ENCODE measurements at regions of chr3 and their contacts with region 1.

Region 1: DNA sequence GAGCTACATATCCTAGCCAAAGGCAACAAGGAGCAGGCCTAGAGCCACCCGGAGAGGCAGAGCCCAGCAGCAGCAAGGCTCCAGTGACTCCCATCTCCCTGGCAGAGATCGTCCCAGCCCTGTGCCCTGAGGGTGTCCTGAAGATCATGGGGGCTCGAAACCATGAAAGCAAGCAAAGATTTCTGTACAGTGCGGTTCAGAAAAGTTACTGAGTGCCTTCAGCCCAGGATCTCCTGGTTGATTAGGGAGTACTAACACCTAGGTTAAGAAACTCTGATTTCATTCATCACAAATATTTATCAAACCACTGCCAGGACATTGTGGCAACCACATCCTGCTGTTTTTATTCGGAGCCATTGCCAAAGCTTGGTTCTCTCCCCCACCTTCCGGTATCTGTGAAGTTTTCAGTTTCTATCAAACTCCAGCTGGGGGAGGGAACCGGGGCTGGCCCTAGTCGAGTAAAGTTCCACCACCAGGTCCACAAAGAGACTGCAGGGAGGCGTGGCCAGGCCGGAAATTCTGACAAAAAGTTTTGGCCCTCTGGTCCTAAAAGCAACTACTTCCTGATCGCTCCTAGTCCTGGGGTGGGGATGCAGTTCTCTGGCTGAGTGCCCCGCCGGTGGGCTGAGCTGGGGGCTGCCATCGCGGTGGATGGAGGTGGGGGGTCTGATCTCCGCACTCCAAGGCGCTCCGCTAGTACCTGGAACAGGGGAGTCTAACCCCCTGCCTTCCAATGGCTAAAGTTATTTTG is 1.2 kb downstream of the RAB43 start:
- DNase-seq: peak; percentile 63 to 96 (median 93)
- ATAC-seq: peak; percentile 72
- H3K4me3 ChIP-seq: peak overlapping the region; percentile 95
- H3K4me3 Mint-ChIP-seq: peak overlapping the region; percentile 86 to 99 (median 98)
- H3K27ac ChIP-seq: peak overlapping the region; percentile 83
- H3K27ac Mint-ChIP-seq: peak overlapping the region; percentile 91 to 100 (median 97)
- H3K4me1 ChIP-seq: peaks cover 32 to 33% of the 10 kb centered on the region in 2 donors
- H3K4me1 Mint-ChIP-seq: peaks cover 26 to 58% (median 42%) of the 10 kb centered on the region in 7 donors
- H3K27me3 ChIP-seq: no peaks in the 10 kb centered on the region
- H3K27me3 Mint-ChIP-seq: no peaks in the 10 kb centered on the region

Region 2: GRCh38 chr3:128617557-128618397 is 502.7 kb before region 1 on chr3:
- CTCF ChIA-PET with region 1: no interaction called
- POLR2A ChIA-PET with region 1: no interaction called
- intact Hi-C with region 1: loop called in 1 of 2 experiments (anchors 2 kb)
- DNase-seq: peak; percentile 94 to 100 (median 99)
- ATAC-seq: peak; percentile 96
- H3K4me3 ChIP-seq: peak overlapping the region; percentile 99
- H3K4me3 Mint-ChIP-seq: peak overlapping the region; percentile 94 to 99 (median 97)
- H3K27ac ChIP-seq: peak overlapping the region; percentile 88
- H3K27ac Mint-ChIP-seq: peak overlapping the region; percentile 92 to 98 (median 97)
- H3K4me1 ChIP-seq: peaks cover 16 to 19% of the 10 kb centered on the region in 2 donors
- H3K4me1 Mint-ChIP-seq: peaks cover 10 to 36% (median 33%) of the 10 kb centered on the region in 7 donors
- H3K27me3 ChIP-seq: no peaks in the 10 kb centered on the region
- H3K27me3 Mint-ChIP-seq: no peaks in the 10 kb centered on the region

Region 3: GRCh38 chr3:128804017-128804810 is 316.2 kb before region 1 on chr3:
- CTCF ChIA-PET with region 1: no interaction called
- POLR2A ChIA-PET with region 1: no interaction called
- intact Hi-C with region 1: loop called (anchors 5 kb)
- DNase-seq: peak in 8 of 9 donors; percentile 54 to 88 (median 84)
- ATAC-seq: peak; percentile 92
- H3K4me3 ChIP-seq: peak overlapping the region; percentile 49
- H3K4me3 Mint-ChIP-seq: peak overlapping the region; percentile 48 to 89 (median 80)
- H3K27ac ChIP-seq: peak overlapping the region; percentile 74
- H3K27ac Mint-ChIP-seq: peak overlapping the region; percentile 91 to 98 (median 96)
- H3K4me1 ChIP-seq: peaks cover 22 to 64% of the 10 kb centered on the region in 2 donors
- H3K4me1 Mint-ChIP-seq: peaks cover 59 to 91% (median 85%) of the 10 kb centered on the region in 7 donors
- H3K27me3 ChIP-seq: no peaks in the 10 kb centered on the region
- H3K27me3 Mint-ChIP-seq: no peaks in the 10 kb centered on the region

Region 4: GRCh38 chr3:129016356-129016719 is 104.1 kb before region 1 on chr3:
- CTCF ChIA-PET with region 1: interaction called, 21 read pairs
- POLR2A ChIA-PET with region 1: interaction called, 60 read pairs
- intact Hi-C with region 1: no loop called
- DNase-seq: peak in 7 of 9 donors; percentile 54 to 71 (median 65)
- ATAC-seq: peak; percentile 85
- H3K4me3 ChIP-seq: peak overlapping the region; percentile 41
- H3K4me3 Mint-ChIP-seq: peak overlapping the region; percentile 68 to 87 (median 84)
- H3K27ac ChIP-seq: peak overlapping the region; percentile 75
- H3K27ac Mint-ChIP-seq: peak overlapping the region; percentile 90 to 100 (median 97)
- H3K4me1 ChIP-seq: peaks cover 26 to 33% of the 10 kb centered on the region in 2 donors
- H3K4me1 Mint-ChIP-seq: peaks cover 31 to 66% (median 48%) of the 10 kb centered on the region in 7 donors
- H3K27me3 ChIP-seq: no peaks in the 10 kb centered on the region
- H3K27me3 Mint-ChIP-seq: no peaks in the 10 kb centered on the region

Region 5: GRCh38 chr3:129087138-129087702 is 33.2 kb before region 1 on chr3:
- CTCF ChIA-PET with region 1: no interaction called
- POLR2A ChIA-PET with region 1: interaction called, 37 read pairs
- intact Hi-C with region 1: loop called (anchors 2 to 5 kb)
- DNase-seq: no peak
- ATAC-seq: no peak
- H3K4me3 ChIP-seq: no peak overlapping the region
- H3K4me3 Mint-ChIP-seq: no peak overlapping the region
- H3K27ac ChIP-seq: peak overlapping the region; percentile 39
- H3K27ac Mint-ChIP-seq: peak overlapping the region in 4 of 9 donors; percentile 38 to 88 (median 62)
- H3K4me1 ChIP-seq: no peaks in the 10 kb centered on the region
- H3K4me1 Mint-ChIP-seq: peaks cover 0 to 21% (median 14%) of the 10 kb centered on the region in 7 donors
- H3K27me3 ChIP-seq: no peaks in the 10 kb centered on the region
- H3K27me3 Mint-ChIP-seq: no peaks in the 10 kb centered on the region

Region 6: GRCh38 chr3:129160891-129161859 is 40.7 kb after region 1 on chr3 and contains the start of gene ISY1:
- CTCF ChIA-PET with region 1: interaction called, 9 read pairs
- POLR2A ChIA-PET with region 1: interaction called, 3 read pairs
- intact Hi-C with region 1: loop called (anchors 1 kb)
- DNase-seq: peak; percentile 68 to 92 (median 89)
- ATAC-seq: peak; percentile 90
- H3K4me3 ChIP-seq: peak within 1 kb of the TSS; percentile 94
- H3K4me3 Mint-ChIP-seq: peak within 1 kb of the TSS; percentile 84 to 100 (median 98)
- H3K27ac ChIP-seq: peak within 1 kb of the TSS; percentile 98
- H3K27ac Mint-ChIP-seq: peak within 1 kb of the TSS; percentile 97 to 100 (median 99)
- H3K4me1 ChIP-seq: peaks cover 22 to 24% of the 10 kb centered on the region in 2 donors
- H3K4me1 Mint-ChIP-seq: peaks cover 18 to 53% (median 40%) of the 10 kb centered on the region in 7 donors
- H3K27me3 ChIP-seq: no peaks in the 10 kb centered on the region
- H3K27me3 Mint-ChIP-seq: peaks cover 0 to 4% (median 0%) of the 10 kb centered on the region in 5 donors
- total RNA-seq, gene ISY1: 27.6 to 65.1 (median 37.4) TPM

Region 7: DNA sequence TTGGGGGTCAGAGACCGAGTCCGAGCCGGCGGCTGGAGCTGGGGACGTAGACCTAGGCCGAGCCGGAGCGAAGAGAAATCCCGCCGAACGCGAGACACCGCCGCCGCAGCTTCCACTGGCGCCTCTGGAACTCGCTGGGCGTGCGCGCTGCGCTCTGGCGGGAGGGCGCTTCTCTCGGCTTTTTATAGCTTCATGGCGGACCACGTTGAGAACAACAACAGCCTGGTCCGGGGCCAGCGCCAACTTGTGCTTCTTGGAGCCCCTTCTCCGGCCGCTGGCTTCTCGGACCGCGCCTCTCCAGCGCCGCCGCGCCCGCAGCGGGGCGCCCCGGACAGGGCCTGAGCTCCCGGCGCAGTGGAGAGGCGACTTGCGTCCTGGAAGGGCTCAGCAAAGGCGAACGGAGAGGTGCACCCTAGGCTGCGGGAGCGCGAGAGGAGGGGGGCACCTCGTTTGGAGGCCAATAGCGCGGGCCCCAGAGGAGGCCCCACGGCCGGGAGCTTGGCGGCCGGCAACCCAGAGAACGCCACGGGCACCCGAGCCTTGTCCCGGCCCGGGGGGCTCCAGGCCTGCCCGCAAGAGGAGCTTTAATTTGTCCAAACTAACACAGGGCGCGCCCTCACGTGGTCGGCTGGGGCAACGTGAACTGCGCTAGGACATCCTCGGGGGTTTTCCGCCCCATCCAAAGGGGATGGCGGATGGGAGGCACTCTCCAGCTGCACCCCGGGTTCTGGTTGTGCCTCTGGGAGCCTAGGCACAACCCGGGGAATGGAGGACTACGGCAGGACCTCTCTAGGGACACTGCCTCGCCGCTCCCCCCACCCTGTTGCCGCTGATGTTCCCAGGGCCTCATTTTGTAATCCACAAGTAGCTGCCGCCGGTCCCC is 195.9 kb after region 1 on chr3:
- CTCF ChIA-PET with region 1: interaction called, 3 read pairs
- POLR2A ChIA-PET with region 1: interaction called, 46 read pairs
- intact Hi-C with region 1: loop called (anchors 1 to 2 kb)
- DNase-seq: peak; percentile 80 to 96 (median 88)
- ATAC-seq: peak; percentile 75
- H3K4me3 ChIP-seq: peak overlapping the region; percentile 89
- H3K4me3 Mint-ChIP-seq: peak overlapping the region; percentile 70 to 97 (median 88)
- H3K27ac ChIP-seq: peak overlapping the region; percentile 88
- H3K27ac Mint-ChIP-seq: peak overlapping the region; percentile 80 to 94 (median 88)
- H3K4me1 ChIP-seq: peaks cover 5 to 10% of the 10 kb centered on the region in 2 donors
- H3K4me1 Mint-ChIP-seq: peaks cover 17 to 31% (median 24%) of the 10 kb centered on the region in 7 donors
- H3K27me3 ChIP-seq: no peaks in the 10 kb centered on the region
- H3K27me3 Mint-ChIP-seq: peaks cover 0 to 2% (median 0%) of the 10 kb centered on the region in 5 donors

Measured in naive thymus-derived CD4-positive, alpha-beta T cell (primary cell).